Activated naive CD4-positive, alpha-beta T cell treated with anti-CD3 and anti-CD28 coated beads, Interleukin-2, amount 10 ng/mL, durations not matched to agents 7 days and 5 days (primary cell): ENCODE measurements at regions of chr1 and their contacts with region 1.

Region 1: DNA sequence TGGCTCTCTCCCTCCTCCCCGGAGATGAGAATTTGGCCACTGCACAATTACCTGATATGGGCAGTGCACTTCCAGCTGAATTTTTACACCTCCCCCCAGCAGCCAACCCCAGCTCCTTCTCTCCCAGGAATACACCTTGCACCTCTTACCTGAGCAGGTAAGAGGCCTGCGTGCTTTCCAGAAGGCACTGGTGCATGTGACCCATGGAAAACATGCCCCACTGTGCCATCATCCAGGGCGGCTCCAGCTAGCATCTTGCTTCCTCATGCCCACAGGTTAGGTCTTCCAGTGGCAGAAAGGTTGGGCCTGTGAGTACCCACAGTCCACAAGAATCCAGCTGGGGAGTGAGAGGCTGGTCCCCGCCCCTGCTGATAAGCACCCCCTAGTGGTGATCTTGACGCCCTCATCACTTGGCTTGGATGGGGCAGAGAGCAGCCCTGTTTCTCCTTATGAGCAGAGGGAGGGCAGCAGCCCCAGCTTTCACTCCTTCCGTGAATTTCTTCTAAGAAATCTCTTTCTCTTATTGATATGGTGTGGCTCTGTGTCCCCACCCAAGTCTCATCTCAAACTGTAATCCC is 57.8 kb downstream of the EDARADD start:
- DNase-seq: peak; percentile 52
- H3K4me3 Mint-ChIP-seq: no peak overlapping the region
- H3K27ac Mint-ChIP-seq: no peak overlapping the region
- H3K4me1 Mint-ChIP-seq: no peaks in the 10 kb centered on the region
- H3K27me3 Mint-ChIP-seq: peaks cover 11% of the 10 kb centered on the region

Region 2: DNA sequence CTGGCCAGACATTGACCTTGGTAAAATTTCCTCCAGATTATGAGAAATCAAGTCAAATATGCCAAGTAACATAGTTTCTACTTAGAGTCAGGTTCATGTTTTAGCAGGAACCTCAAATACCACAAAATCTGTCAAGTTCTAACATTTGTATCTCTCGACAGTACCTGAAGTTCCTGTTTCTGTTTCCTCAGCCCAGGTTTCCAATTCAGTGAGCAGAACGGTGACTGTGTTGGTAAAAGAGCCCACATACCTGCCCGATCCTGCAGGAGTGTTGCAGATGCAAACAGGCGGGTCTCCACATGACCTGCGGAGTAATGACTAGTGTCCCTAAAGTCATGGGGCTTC is 14.0 kb after region 1 on chr1:
- CTCF ChIA-PET with region 1: interaction called, 10 read pairs
- DNase-seq: no peak
- H3K4me3 Mint-ChIP-seq: no peak overlapping the region
- H3K27ac Mint-ChIP-seq: no peak overlapping the region
- H3K4me1 Mint-ChIP-seq: peaks cover 17% of the 10 kb centered on the region
- H3K27me3 Mint-ChIP-seq: peaks cover 68% of the 10 kb centered on the region